Astrocyte of the cerebellum (primary cell): ENCODE measurements at regions of chr4 and their contacts with region 1.

Region 1: DNA sequence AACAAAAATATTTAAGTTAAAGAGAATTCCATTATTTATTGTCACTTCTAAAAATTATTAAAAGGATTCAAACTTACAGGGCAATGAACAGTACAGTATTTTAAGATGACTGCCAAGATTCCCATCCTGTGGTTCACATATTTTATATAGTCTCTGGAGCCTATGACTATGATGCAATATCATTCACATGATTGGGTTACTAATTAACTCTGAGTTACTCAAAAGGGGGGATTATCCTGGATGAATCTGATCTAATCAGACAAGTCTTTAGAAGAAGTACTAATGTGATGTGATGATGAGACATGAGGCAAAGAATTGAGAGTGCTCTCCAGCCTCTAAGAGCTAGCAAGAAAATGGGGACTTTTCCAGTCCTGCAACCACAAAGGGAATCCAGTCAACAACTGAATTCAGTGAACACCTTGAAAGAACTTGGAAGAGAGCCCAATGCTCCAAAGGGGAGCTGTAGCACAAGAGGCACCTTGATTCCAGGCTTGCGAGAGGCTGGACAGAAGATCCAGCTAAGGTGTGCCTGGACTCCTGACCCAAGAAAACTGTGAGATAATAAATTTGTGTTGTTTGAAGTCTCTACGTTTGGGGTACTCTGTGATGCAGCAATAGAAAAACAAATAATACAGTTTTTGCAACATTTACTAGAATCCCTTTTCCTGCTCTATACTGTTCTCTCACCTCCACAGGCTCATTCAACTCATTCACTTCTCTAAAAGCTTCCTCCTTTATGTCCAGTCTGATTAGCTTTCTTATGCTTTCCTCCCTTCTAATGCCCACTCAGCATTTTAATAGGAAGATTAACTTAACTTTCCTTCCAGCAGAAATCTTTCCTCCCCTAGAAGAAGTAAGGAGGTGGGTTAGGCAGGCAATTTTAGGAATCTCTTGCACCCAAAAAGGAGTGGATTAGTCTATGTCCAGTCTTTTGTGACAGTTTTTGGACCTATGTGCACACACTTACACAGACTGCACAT is 133.8 kb upstream of the LCORL start:
- DNase-seq: no peak
- H3K4me3 ChIP-seq: no peak overlapping the region
- CTCF ChIP-seq: no peak

Region 2: DNA sequence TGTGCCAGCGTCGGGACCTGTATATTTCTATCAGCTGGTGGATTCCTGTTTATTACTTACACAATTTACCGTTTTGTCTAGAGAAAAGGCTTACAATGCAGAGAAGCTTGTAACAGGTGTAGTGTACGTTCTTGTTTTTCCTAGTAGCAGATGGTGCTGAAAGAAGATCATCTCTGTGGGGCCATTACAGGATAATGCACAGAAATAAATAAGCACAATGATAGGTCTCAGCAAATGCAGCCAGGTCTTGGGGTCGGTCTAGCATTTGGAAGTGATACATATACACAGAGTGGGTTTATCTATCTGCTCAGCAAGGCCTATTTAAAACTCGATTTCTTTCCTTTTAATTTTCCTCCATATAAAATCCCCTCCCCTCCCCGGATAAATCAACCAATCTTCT is 47.1 kb after region 1 on chr4:
- in situ Hi-C with region 1: loop called (anchors 5 kb)
- DNase-seq: no peak
- H3K4me3 ChIP-seq: no peak overlapping the region
- CTCF ChIP-seq: no peak

Region 3: DNA sequence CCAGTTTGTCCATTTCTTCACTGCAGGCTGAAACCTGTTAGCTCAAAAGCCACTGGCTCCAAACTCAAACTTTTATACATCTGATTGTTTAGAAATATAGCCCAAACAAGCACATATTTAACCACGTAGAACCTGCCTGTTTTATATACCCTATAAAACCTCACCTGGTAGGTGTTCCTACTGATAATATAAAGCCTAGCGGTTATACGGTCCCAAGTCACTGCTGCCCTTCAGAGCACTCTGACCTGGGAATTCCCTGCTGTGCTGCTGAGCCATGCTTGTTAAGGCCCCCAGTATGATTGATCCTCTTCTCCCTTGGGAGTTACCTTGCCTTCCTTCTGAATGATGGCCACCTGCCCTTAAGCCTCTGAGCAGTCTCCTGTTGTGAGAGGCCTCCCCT is 299.0 kb after region 1 on chr4:
- in situ Hi-C with region 1: no loop called
- DNase-seq: no peak
- H3K4me3 ChIP-seq: no peak overlapping the region
- CTCF ChIP-seq: no peak